ENCODE measurements at regions of chr3 and their contacts with region 1.

Region 1: DNA sequence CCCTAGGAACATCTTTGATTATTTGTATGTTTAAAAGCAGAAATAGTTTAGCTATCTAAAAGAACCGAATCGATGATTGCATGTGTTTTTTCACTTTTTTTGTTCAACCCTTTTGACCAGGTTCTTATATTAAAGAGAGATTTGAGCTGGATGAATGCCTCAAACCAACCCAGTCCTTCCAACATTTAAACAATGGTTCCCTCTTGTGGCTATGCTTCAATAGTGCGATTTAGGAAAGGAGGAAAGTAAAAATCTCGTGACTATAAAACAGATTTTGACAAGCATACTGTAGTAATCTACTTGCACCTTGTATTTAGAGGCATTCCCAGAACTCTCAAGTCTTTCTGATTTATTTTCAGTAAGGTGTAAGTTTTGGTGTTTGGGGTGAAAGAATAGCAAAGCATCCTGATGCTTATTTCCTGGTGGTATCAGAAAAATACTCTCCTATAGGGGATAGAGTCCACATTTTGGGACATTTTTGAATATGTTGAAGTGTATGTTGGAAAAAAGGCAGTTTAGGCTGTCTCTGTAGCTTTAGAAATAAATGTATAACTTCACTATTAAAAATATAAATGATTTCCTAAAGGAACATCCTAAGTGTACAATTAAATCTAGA is 159.6 kb upstream of the KCNH8 start:
- DNase-seq: peak in 1 of 2 experiments; percentile 15
- H3K4me3 ChIP-seq: no peak overlapping the region
- H3K4me3 Mint-ChIP-seq: no peak overlapping the region
- H3K27ac Mint-ChIP-seq: no peak overlapping the region
- H3K4me1 ChIP-seq: no peaks in the 10 kb centered on the region
- H3K4me1 Mint-ChIP-seq: no peaks in the 10 kb centered on the region
- H3K27me3 ChIP-seq: no peaks in the 10 kb centered on the region
- H3K27me3 Mint-ChIP-seq: no peaks in the 10 kb centered on the region
- CTCF ChIP-seq: peak; percentile 62 to 64

Region 2: GRCh38 chr3:18559331-18559842 is 429.3 kb before region 1 on chr3:
- CTCF ChIA-PET with region 1: interaction called, 4 read pairs
- POLR2A ChIA-PET with region 1: no interaction called
- intact Hi-C with region 1: loop called (anchors 1 kb)
- DNase-seq: peak; percentile 45 to 48
- H3K4me3 ChIP-seq: no peak overlapping the region
- H3K4me3 Mint-ChIP-seq: no peak overlapping the region
- H3K27ac Mint-ChIP-seq: no peak overlapping the region
- H3K4me1 ChIP-seq: no peaks in the 10 kb centered on the region
- H3K4me1 Mint-ChIP-seq: peaks cover 14% of the 10 kb centered on the region
- H3K27me3 ChIP-seq: no peaks in the 10 kb centered on the region
- H3K27me3 Mint-ChIP-seq: no peaks in the 10 kb centered on the region
- CTCF ChIP-seq: peak; percentile 68 to 72

Region 3: GRCh38 chr3:18679238-18679637 is 309.5 kb before region 1 on chr3:
- CTCF ChIA-PET with region 1: no interaction called
- POLR2A ChIA-PET with region 1: no interaction called
- intact Hi-C with region 1: no loop called
- DNase-seq: no peak
- H3K4me3 ChIP-seq: no peak overlapping the region
- H3K4me3 Mint-ChIP-seq: no peak overlapping the region
- H3K27ac Mint-ChIP-seq: no peak overlapping the region
- H3K4me1 ChIP-seq: no peaks in the 10 kb centered on the region
- H3K4me1 Mint-ChIP-seq: no peaks in the 10 kb centered on the region
- H3K27me3 ChIP-seq: no peaks in the 10 kb centered on the region
- H3K27me3 Mint-ChIP-seq: no peaks in the 10 kb centered on the region
- CTCF ChIP-seq: no peak

Region 4: GRCh38 chr3:18758047-18758704 is 230.5 kb before region 1 on chr3:
- CTCF ChIA-PET with region 1: no interaction called
- POLR2A ChIA-PET with region 1: no interaction called
- intact Hi-C with region 1: loop called (anchors 5 kb)
- DNase-seq: peak; percentile 43 to 81
- H3K4me3 ChIP-seq: no peak overlapping the region
- H3K4me3 Mint-ChIP-seq: no peak overlapping the region
- H3K27ac Mint-ChIP-seq: no peak overlapping the region
- H3K4me1 ChIP-seq: peaks cover 7% of the 10 kb centered on the region
- H3K4me1 Mint-ChIP-seq: peaks cover 11% of the 10 kb centered on the region
- H3K27me3 ChIP-seq: no peaks in the 10 kb centered on the region
- H3K27me3 Mint-ChIP-seq: no peaks in the 10 kb centered on the region
- CTCF ChIP-seq: peak; percentile 59 to 70

Region 5: GRCh38 chr3:18847583-18848197 is 141.0 kb before region 1 on chr3:
- CTCF ChIA-PET with region 1: no interaction called
- POLR2A ChIA-PET with region 1: no interaction called
- intact Hi-C with region 1: loop called (anchors 1 kb)
- DNase-seq: peak in 1 of 2 experiments; percentile 8
- H3K4me3 ChIP-seq: no peak overlapping the region
- H3K4me3 Mint-ChIP-seq: no peak overlapping the region
- H3K27ac Mint-ChIP-seq: no peak overlapping the region
- H3K4me1 ChIP-seq: 0 out of 2 replicates have a peak, but pooled peaks cover 9% of the 10 kb centered on the region
- H3K4me1 Mint-ChIP-seq: no peaks in the 10 kb centered on the region
- H3K27me3 ChIP-seq: no peaks in the 10 kb centered on the region
- H3K27me3 Mint-ChIP-seq: no peaks in the 10 kb centered on the region
- CTCF ChIP-seq: peak in 1 of 2 experiments; percentile 25

Region 6: DNA sequence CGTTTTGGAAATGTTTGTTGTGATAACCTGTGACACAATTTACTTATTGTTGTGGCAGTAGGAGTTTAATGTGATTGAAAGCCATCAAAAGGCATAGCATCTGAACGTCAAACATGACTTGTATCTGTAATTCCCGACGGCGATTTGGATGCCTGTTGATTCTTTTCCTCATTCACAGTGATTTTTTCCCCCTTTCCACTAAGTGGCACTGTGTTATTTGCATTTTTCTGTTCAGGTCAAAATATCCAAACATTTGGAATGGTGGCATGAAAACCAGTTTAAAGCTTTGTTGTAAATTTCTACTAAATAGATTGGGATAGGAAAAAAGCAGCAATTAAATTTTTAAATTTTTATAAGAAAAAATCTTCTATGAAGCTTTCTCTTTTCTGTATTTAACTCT is 100.4 kb before region 1 on chr3:
- CTCF ChIA-PET with region 1: no interaction called
- POLR2A ChIA-PET with region 1: no interaction called
- intact Hi-C with region 1: loop called (anchors 1 kb)
- DNase-seq: no peak
- H3K4me3 ChIP-seq: no peak overlapping the region
- H3K4me3 Mint-ChIP-seq: no peak overlapping the region
- H3K27ac Mint-ChIP-seq: no peak overlapping the region
- H3K4me1 ChIP-seq: no peaks in the 10 kb centered on the region
- H3K4me1 Mint-ChIP-seq: no peaks in the 10 kb centered on the region
- H3K27me3 ChIP-seq: no peaks in the 10 kb centered on the region
- H3K27me3 Mint-ChIP-seq: peaks cover 11% of the 10 kb centered on the region
- CTCF ChIP-seq: peak in 1 of 2 experiments; percentile 28

Region 7: DNA sequence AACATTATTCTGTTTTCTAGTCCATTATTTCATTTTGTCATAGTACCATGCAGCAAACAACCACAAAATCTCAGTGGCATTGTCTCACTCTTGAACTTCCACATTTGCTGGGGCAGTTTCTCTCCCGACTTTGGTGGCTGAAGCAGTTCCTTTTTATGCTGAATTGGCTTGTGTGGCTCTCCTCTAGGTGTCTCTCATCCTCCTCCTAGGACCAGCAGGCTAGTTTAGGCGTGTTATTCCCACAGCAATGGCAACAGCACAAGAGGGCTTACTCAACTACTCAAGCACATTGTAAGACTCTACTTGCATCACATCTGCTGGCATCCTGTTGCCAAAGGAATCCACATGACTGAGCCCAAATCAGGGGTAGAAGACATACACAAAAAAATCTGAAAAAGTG is 42.2 kb before region 1 on chr3:
- CTCF ChIA-PET with region 1: no interaction called
- POLR2A ChIA-PET with region 1: no interaction called
- intact Hi-C with region 1: loop called (anchors 1 kb)
- DNase-seq: peak; percentile 15 to 39
- H3K4me3 ChIP-seq: no peak overlapping the region
- H3K4me3 Mint-ChIP-seq: no peak overlapping the region
- H3K27ac Mint-ChIP-seq: no peak overlapping the region
- H3K4me1 ChIP-seq: no peaks in the 10 kb centered on the region
- H3K4me1 Mint-ChIP-seq: no peaks in the 10 kb centered on the region
- H3K27me3 ChIP-seq: no peaks in the 10 kb centered on the region
- H3K27me3 Mint-ChIP-seq: peaks cover 3% of the 10 kb centered on the region
- CTCF ChIP-seq: peak in 1 of 2 experiments; percentile 11

Region 8: GRCh38 chr3:19030522-19030839 is 41.8 kb after region 1 on chr3:
- CTCF ChIA-PET with region 1: interaction called, 4 read pairs
- POLR2A ChIA-PET with region 1: no interaction called
- intact Hi-C with region 1: loop called (anchors 2 kb)
- DNase-seq: peak in 1 of 2 experiments; percentile 29
- H3K4me3 ChIP-seq: no peak overlapping the region
- H3K4me3 Mint-ChIP-seq: no peak overlapping the region
- H3K27ac Mint-ChIP-seq: no peak overlapping the region
- H3K4me1 ChIP-seq: no peaks in the 10 kb centered on the region
- H3K4me1 Mint-ChIP-seq: no peaks in the 10 kb centered on the region
- H3K27me3 ChIP-seq: no peaks in the 10 kb centered on the region
- H3K27me3 Mint-ChIP-seq: peaks cover 10% of the 10 kb centered on the region
- CTCF ChIP-seq: peak in 1 of 2 experiments; percentile 19